ENCODE measurements at regions of chr9 and their contacts with region 1.

Region 1: GRCh38 chr9:135085830-135086546 is 1.5 kb upstream of the OLFM1 start:
- DNase-seq: peak; percentile 35
- H3K4me3 Mint-ChIP-seq: no peak overlapping the region
- H3K27ac Mint-ChIP-seq: no peak overlapping the region
- H3K4me1 Mint-ChIP-seq: peaks cover 3% of the 10 kb centered on the region
- H3K27me3 Mint-ChIP-seq: peaks cover 27% of the 10 kb centered on the region

Region 2: GRCh38 chr9:134992755-134993124 is 93.2 kb before region 1 on chr9:
- intact Hi-C with region 1: no loop called
- DNase-seq: no peak
- H3K4me3 Mint-ChIP-seq: no peak overlapping the region
- H3K27ac Mint-ChIP-seq: no peak overlapping the region
- H3K4me1 Mint-ChIP-seq: no peaks in the 10 kb centered on the region
- H3K27me3 Mint-ChIP-seq: no peaks in the 10 kb centered on the region

Region 3: GRCh38 chr9:135343837-135344522 is 258.0 kb after region 1 on chr9:
- intact Hi-C with region 1: loop called (anchors 2 kb)
- DNase-seq: peak; percentile 27
- H3K4me3 Mint-ChIP-seq: no peak overlapping the region
- H3K27ac Mint-ChIP-seq: no peak overlapping the region
- H3K4me1 Mint-ChIP-seq: no peaks in the 10 kb centered on the region
- H3K27me3 Mint-ChIP-seq: peaks cover 4% of the 10 kb centered on the region

Region 4: GRCh38 chr9:135410831-135411473 is 325.0 kb after region 1 on chr9:
- intact Hi-C with region 1: loop called (anchors 5 kb)
- DNase-seq: no peak
- H3K4me3 Mint-ChIP-seq: no peak overlapping the region
- H3K27ac Mint-ChIP-seq: no peak overlapping the region
- H3K4me1 Mint-ChIP-seq: no peaks in the 10 kb centered on the region
- H3K27me3 Mint-ChIP-seq: peaks cover 2% of the 10 kb centered on the region

Measured in activated T-helper 2 cell treated with anti-CD3 and anti-CD28 coated beads, Interferon-gamma antibody, Interleukin-2, Interleukin-4, amounts not matched to agents 10 μg/mL and 5 μg/mL and 100 μg/mL, durations not matched to agents 14 hours and 24 hours and 36 hours (primary cell).